PC-3 (cell line): ENCODE measurements at regions of chr11 and their contacts with region 1.

Region 1: DNA sequence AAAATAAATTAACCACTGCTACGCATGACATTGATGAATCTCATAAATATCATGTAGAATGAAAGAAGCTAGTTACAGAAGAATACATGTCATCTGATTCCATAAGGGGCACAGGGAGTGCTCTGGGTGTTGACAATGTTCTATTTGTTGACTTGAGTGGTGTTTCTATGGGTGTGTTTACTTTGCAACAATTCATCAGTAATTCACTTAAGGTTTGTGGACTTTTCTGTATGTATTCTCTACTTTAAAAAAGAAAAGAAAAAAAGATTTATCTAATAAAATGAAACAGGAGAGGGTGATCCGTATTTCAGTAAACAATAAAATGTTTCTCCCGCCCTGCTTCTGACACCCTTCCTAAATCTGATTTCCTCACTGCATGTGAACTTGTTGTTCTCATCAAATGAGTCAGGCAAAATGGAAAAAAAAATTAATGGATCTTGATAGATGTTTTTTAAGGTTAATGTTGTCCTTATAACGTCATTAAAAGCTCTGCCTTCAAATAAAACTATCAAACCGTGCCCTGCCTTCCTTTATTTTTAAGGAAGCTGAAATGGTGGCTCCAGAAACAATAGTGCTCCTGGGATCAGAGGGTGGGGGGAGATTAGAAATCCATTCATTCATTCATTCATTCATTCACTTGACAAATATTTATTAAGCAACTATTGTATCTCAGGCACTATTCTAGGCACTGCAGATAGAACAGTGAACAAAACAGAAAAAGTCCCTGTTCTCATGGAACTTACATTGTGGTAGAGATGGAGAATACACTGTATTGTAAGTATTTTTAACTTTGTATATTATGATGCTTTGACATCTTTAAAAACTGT is 77.1 kb upstream of the CD44 start:
- DNase-seq: peak; percentile 55
- ATAC-seq: peak; percentile 90
- H3K4me3 ChIP-seq: no peak overlapping the region
- H3K27ac ChIP-seq: peak overlapping the region; percentile 74
- H3K4me1 ChIP-seq: peaks cover 14% of the 10 kb centered on the region
- H3K27me3 ChIP-seq: no peaks in the 10 kb centered on the region
- CTCF ChIP-seq: no peak

Region 2: DNA sequence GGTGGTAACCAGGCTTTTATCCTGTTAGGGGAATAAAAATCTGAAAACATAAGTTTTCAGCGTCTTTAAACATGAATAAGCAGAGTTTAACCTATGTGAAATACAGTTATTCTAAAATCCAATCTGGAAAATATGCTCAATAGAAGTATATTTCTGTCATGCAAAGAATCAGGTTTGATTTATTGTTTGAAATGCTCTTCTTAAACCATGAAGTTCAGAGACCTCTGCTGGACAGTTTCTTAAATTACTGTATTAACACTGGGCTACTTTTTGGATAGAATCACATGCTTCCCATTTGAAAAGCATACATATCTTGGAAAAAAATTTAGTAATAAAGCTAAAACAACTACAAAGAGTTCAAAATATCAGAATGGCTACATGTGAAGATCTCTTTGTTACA is 171.0 kb before region 1 on chr11:
- CTCF ChIA-PET with region 1: no interaction called
- POLR2A ChIA-PET with region 1: no interaction called
- intact Hi-C with region 1: no loop called
- DNase-seq: peak; percentile 78
- ATAC-seq: peak; percentile 68; the same call in 1 of the 2 replicates
- H3K4me3 ChIP-seq: no peak overlapping the region
- H3K27ac ChIP-seq: peak overlapping the region; percentile 37
- H3K4me1 ChIP-seq: peaks cover 17% of the 10 kb centered on the region
- H3K27me3 ChIP-seq: no peaks in the 10 kb centered on the region
- CTCF ChIP-seq: peak; percentile 72

Region 3: GRCh38 chr11:34988294-34989255 is 73.2 kb before region 1 on chr11:
- CTCF ChIA-PET with region 1: no interaction called
- POLR2A ChIA-PET with region 1: no interaction called
- intact Hi-C with region 1: no loop called
- DNase-seq: no peak
- ATAC-seq: no peak
- H3K4me3 ChIP-seq: no peak overlapping the region
- H3K27ac ChIP-seq: no peak overlapping the region
- H3K4me1 ChIP-seq: peaks cover 13% of the 10 kb centered on the region
- H3K27me3 ChIP-seq: no peaks in the 10 kb centered on the region
- CTCF ChIP-seq: no peak

Region 4: DNA sequence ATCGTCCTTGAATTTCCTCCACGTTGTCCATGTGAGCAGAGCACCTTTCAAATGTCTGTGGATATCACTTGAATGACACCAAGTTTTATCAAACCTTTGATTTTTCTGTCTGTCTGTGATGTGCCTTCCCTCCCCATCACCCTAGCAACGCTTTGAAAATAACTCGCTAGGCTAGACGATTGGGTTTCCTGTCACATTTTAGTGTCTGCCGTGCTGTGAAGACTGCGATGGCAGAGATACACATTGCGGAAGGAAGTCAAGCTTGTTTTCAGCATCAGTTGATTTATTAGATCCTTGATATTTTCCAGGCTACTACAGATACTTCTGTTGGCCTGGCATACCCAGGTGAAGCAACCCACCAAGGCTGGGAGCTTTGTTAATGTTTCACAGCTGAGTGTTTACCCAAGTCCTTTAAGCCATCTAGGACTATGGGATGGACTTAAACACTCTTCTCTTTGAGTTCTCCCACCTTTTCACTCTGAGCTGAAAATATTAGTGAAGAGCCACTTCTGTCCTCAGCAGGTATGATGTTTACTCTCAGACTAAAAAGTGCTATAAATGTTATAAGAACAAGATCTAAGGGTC is 16.5 kb before region 1 on chr11:
- CTCF ChIA-PET with region 1: no interaction called
- POLR2A ChIA-PET with region 1: no interaction called
- intact Hi-C with region 1: no loop called
- DNase-seq: no peak
- ATAC-seq: no peak
- H3K4me3 ChIP-seq: no peak overlapping the region
- H3K27ac ChIP-seq: no peak overlapping the region
- H3K4me1 ChIP-seq: peaks cover 8% of the 10 kb centered on the region
- H3K27me3 ChIP-seq: no peaks in the 10 kb centered on the region
- CTCF ChIP-seq: no peak

Region 5: DNA sequence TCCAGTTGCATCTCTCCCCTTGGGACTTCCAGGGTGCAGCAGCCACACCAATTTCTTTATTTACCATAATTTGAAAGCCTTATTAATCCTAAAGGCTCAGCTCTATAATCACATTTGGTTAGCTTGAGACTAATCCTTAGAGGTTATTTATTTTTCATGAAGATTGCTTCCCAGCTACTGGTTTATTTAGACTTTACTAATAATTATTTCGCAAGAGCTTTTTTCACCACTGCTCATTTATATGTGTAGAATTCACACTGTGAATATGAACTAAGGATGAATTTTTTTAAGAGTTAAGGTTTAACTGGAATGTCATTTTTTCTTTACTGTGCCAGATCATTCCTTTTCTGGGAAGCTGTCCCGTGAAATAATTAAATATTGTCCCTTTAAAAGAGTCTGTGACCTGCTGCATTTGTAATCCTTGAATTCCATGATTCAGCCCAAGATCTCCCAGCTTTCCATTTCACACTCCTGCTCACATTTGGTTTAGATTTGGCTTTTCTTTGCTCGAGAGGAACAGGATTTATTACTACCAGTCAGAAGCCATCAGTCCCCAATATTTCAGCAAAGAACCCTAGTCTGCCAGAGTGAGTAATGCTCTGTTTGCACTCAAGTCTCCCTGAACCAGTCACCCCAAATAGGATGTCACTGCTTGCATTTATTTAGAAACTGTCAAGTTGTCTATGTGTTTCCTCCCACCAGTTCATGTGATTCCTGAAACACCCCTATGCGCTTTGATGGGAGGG is 72.8 kb after region 1 on chr11:
- CTCF ChIA-PET with region 1: no interaction called
- POLR2A ChIA-PET with region 1: no interaction called
- intact Hi-C with region 1: no loop called
- DNase-seq: no peak
- ATAC-seq: no peak
- H3K4me3 ChIP-seq: no peak overlapping the region
- H3K27ac ChIP-seq: no peak overlapping the region
- H3K4me1 ChIP-seq: peaks cover 14% of the 10 kb centered on the region
- H3K27me3 ChIP-seq: no peaks in the 10 kb centered on the region
- CTCF ChIP-seq: no peak

Region 6: DNA sequence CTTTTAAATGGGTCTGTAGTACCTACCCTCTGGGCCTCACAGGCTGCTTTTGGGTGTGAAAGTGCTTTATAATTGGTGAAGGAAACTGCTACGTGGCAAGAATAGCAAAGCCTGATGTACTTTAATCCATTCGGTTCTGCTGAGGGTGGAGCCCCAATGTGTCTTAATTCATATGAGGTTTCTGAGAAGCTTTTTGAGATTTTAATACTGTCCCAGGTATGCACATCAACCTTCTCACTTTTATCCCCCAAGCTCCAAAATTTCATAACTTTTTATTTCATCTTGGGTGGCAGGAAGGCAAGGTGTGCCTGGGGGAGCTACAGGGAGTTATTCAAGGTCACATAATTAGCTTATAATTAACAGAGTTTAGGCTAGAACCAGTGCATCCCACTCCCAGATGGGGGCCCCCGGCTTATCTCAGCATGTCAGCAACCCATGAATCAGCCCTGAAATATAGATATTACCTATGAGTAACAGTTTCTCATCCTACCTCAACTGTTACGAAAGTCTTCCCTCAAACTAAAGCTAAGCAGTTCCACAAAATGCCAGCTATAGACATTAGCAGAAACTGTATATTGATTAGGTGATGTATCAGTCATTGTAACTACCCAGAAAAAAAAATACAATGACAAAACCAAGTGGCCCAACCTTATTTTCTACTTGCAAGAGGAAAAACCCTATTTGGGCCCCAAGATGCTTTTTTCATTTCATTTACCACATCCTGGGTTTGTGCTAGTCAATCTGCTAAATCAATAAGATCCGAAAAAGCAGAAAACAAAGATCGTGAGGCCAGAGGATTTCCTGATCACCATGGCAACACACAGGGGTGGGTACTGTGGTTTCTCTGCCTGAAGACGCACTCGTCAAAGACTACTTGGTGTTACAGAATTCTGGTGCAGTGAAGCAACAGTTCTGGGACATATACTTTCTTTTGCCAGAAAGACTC is 103.9 kb after region 1 on chr11:
- CTCF ChIA-PET with region 1: no interaction called
- POLR2A ChIA-PET with region 1: no interaction called
- intact Hi-C with region 1: loop called (anchors 2 kb)
- DNase-seq: peak; percentile 71
- ATAC-seq: peak; percentile 29
- H3K4me3 ChIP-seq: peak overlapping the region; percentile 42
- H3K27ac ChIP-seq: peak overlapping the region; percentile 97
- H3K4me1 ChIP-seq: peaks cover 64% of the 10 kb centered on the region
- H3K27me3 ChIP-seq: no peaks in the 10 kb centered on the region
- CTCF ChIP-seq: no peak